ENCODE measurements at regions of chr9 and their contacts with region 1.

Region 1: DNA sequence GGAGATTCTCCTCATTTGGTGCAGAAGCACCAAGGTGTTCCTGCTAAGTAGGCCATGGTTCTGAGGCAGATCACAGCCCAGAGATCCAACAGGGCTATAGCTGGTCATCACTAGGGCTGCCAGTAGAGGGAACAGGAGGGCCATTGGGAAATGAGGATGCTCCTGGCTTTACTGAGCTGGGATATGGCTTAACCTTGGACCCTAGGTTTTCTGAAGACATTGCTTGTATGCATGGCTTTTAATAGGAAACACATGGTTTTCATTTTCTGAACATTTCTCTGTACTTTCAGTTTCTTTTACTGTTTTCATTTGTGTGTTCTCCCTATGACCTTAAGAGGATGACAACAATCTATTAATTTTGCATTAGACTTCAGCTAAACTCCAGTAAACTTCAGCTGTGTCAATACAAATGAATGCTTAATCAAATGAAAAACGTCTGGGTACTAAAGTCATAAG is at the start of gene IFNW1:
- DNase-seq: peak in 1 of 2 experiments; percentile 5
- H3K4me3 ChIP-seq: no peak within 1 kb of the TSS
- H3K4me3 Mint-ChIP-seq: no peak within 1 kb of the TSS
- H3K27ac Mint-ChIP-seq: no peak within 1 kb of the TSS
- H3K4me1 ChIP-seq: no peaks in the 10 kb centered on the region
- H3K4me1 Mint-ChIP-seq: no peaks in the 10 kb centered on the region
- H3K27me3 ChIP-seq: no peaks in the 10 kb centered on the region
- H3K27me3 Mint-ChIP-seq: peaks cover 12% of the 10 kb centered on the region
- CTCF ChIP-seq: no peak
- total RNA-seq, gene IFNW1: not detected in 2 replicates

Region 2: GRCh38 chr9:21210311-21210710 is 68.9 kb after region 1 on chr9:
- CTCF ChIA-PET with region 1: no interaction called
- POLR2A ChIA-PET with region 1: no interaction called
- intact Hi-C with region 1: loop called (anchors 2 kb)
- DNase-seq: no peak
- H3K4me3 ChIP-seq: no peak overlapping the region
- H3K4me3 Mint-ChIP-seq: no peak overlapping the region
- H3K27ac Mint-ChIP-seq: no peak overlapping the region
- H3K4me1 ChIP-seq: no peaks in the 10 kb centered on the region
- H3K4me1 Mint-ChIP-seq: no peaks in the 10 kb centered on the region
- H3K27me3 ChIP-seq: no peaks in the 10 kb centered on the region
- H3K27me3 Mint-ChIP-seq: peaks cover 14% of the 10 kb centered on the region
- CTCF ChIP-seq: no peak

Region 3: DNA sequence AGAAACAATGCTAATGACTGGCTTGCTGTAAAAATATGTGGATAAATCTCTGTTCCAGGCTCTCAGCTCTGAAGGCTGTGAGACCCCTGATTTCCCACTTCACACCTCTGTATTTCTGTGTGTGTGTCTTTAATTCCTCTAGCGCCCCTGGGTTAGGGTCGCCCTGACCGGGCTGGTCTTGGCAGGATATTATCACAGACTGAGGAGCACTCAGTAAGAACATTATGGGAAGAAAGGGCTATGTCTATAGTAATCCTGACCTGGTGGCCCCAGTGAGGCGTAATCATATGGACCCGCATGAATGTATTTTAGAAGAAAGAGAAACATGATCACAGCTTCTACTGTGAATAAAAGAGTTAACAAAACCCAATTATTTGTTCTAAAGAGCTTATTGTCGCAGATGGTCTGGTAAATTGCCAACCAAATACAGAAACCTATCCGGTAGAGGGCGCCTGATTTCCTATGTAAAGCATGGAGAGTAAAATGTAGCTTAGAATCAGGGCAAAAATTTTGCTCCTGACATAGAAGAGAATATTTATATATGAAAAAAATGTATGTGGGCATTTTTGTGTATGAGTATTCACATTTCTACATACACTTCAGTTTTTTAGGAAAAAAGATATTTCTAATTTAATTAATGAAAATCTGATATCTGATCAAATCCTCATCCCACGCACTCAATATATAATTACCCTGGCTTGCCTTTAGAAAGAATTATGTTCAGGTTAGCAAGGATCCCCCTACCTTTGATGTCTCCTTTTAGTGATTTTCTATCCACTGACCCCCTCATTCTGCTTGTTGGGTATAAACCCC is 293.0 kb after region 1 on chr9:
- CTCF ChIA-PET with region 1: no interaction called
- POLR2A ChIA-PET with region 1: no interaction called
- intact Hi-C with region 1: no loop called
- DNase-seq: peak in 1 of 2 experiments; percentile 45
- H3K4me3 ChIP-seq: no peak overlapping the region
- H3K4me3 Mint-ChIP-seq: no peak overlapping the region
- H3K27ac Mint-ChIP-seq: no peak overlapping the region
- H3K4me1 ChIP-seq: no peaks in the 10 kb centered on the region
- H3K4me1 Mint-ChIP-seq: no peaks in the 10 kb centered on the region
- H3K27me3 ChIP-seq: no peaks in the 10 kb centered on the region
- H3K27me3 Mint-ChIP-seq: peaks cover 2% of the 10 kb centered on the region
- CTCF ChIP-seq: peak; percentile 26 to 48